Caco-2 (cell line): ENCODE measurements at regions of chr3 and their contacts with region 1.

Region 1: DNA sequence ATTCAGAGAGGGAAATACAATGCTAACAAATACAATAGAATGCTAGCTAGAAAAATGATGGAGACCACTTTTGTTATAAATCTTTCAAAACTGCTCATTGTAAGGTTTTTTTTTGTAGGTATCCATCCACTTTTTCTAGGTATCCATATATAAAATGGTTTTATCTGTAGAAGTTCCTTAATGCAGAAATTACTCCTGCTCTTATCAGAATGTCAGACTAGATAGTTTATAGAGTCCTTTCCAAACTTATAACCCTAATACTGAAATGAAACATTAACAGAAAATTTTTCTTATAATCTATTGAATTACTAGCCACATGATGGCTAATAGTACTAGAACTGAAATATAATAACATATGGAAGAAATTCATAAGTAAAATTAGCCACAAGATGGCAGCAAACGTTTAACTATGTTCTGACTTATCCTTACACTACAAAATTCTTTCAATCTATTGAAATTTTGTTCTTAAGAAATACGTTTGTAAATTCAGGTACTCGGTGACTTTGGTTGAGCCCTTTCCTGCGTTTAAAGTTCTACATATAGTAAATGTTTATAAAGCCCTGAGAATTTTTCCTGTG is 58.5 kb downstream of the ECT2 start:
- DNase-seq: no peak
- H3K4me3 ChIP-seq: no peak overlapping the region
- H3K4me3 Mint-ChIP-seq: no peak overlapping the region
- H3K27ac Mint-ChIP-seq: no peak overlapping the region
- H3K4me1 ChIP-seq: no peaks in the 10 kb centered on the region
- H3K4me1 Mint-ChIP-seq: no peaks in the 10 kb centered on the region
- H3K27me3 ChIP-seq: no peaks in the 10 kb centered on the region
- H3K27me3 Mint-ChIP-seq: no peaks in the 10 kb centered on the region
- CTCF ChIP-seq: peak in 1 of 2 experiments; percentile 42

Region 2: DNA sequence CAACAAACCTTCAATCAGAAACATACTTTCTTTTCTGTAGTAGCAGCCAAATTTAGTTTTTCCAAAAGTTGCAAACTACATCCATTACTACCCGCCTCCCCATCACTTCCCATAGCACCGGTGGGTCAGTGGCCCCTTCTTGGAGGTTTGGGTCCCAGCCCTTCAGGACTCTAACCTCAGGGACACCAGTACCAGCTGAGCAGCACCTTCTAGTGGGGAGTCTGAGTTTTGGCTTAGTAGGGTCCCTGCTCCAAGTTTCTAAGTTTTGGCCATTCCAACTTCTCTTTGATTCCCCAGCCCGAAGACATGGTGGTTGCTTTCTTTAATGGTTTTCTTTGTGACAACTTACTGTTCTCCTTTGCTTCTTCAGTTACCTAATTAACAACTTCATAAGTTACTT is 102.1 kb after region 1 on chr3:
- CTCF ChIA-PET with region 1: no interaction called
- POLR2A ChIA-PET with region 1: no interaction called
- intact Hi-C with region 1: loop called (anchors 1 kb)
- DNase-seq: no peak
- H3K4me3 ChIP-seq: no peak overlapping the region
- H3K4me3 Mint-ChIP-seq: no peak overlapping the region
- H3K27ac Mint-ChIP-seq: no peak overlapping the region
- H3K4me1 ChIP-seq: 0 out of 2 replicates have a peak, but pooled peaks cover 3% of the 10 kb centered on the region
- H3K4me1 Mint-ChIP-seq: no peaks in the 10 kb centered on the region
- H3K27me3 ChIP-seq: no peaks in the 10 kb centered on the region
- H3K27me3 Mint-ChIP-seq: peaks cover 6% of the 10 kb centered on the region
- CTCF ChIP-seq: no peak

Region 3: GRCh38 chr3:173045770-173046382 is 236.8 kb after region 1 on chr3:
- CTCF ChIA-PET with region 1: no interaction called
- POLR2A ChIA-PET with region 1: no interaction called
- intact Hi-C with region 1: loop called (anchors 2 kb)
- DNase-seq: no peak
- H3K4me3 ChIP-seq: no peak overlapping the region
- H3K4me3 Mint-ChIP-seq: no peak overlapping the region
- H3K27ac Mint-ChIP-seq: no peak overlapping the region
- H3K4me1 ChIP-seq: no peaks in the 10 kb centered on the region
- H3K4me1 Mint-ChIP-seq: no peaks in the 10 kb centered on the region
- H3K27me3 ChIP-seq: no peaks in the 10 kb centered on the region
- H3K27me3 Mint-ChIP-seq: peaks cover 9% of the 10 kb centered on the region
- CTCF ChIP-seq: peak; percentile 9 to 12